Left cardiac atrium (tissue), 4 donors: ENCODE measurements at regions of chr12 and their contacts with region 1.

Region 1: DNA sequence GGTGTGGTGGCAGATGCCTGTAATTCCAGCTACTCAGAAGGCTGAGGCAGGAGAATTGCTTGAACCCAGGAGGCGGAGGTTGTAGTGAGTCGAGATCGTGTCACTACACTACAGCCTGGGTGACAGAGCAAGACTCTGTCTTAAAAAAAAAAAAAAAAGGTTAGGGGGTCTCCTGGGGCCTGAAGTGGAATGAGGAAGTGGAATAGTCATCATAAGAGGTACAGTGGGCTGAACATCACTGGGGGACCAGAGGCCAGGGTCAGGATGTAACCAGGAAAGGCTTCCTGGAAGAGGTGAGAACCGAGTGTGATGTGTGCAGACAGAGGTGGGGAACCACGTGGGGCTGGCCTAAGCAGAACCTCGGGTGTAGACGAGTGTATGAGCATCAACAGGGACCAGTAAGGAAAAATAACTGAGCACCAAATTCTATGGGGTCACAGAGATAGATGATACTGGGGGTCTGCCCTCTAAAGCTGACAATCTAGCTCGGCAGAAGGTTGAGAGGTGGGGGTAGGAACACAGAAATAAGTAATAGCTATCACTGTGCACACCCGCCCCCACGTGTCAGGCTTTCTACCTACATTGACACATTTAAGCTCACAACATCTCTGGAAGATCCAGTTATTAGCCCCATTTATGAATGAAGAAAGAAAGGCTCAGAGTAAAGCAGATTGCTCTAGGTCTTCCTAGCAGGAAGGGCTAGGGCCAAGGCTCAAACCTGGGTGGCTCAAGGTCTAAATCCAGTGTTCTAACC is 5.0 kb upstream of the COX6A1 start:
- DNase-seq: no peak
- ATAC-seq: no peak

Region 2: DNA sequence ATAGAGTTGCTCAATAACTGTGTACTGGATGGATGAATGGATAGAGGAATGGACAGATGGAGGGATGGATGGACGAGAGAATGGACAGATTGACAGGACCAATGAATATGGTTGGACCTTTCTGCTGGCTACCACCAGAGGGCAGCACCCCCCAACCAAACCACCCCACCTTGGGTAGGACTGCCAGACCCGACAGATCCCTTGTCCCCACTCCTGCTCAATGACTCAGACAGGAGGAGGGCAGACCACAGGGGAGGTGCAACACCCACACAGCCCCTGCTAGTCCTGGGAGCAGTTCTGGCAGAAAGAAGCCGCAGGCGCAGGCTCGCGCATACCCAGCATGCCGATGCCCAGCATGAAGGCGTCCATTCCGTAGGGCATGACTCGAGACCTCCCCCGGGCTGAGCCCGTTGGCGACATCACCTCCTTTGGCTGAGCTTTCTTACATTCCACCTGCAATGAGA is 76.3 kb before region 1 on chr12:
- intact Hi-C with region 1: loop called (anchors 1 to 5 kb)
- DNase-seq: peak; percentile 78
- ATAC-seq: peak; percentile 84 to 95